AG04450 (cell line): ENCODE measurements at regions of chr12 and their contacts with region 1.

Region 1: DNA sequence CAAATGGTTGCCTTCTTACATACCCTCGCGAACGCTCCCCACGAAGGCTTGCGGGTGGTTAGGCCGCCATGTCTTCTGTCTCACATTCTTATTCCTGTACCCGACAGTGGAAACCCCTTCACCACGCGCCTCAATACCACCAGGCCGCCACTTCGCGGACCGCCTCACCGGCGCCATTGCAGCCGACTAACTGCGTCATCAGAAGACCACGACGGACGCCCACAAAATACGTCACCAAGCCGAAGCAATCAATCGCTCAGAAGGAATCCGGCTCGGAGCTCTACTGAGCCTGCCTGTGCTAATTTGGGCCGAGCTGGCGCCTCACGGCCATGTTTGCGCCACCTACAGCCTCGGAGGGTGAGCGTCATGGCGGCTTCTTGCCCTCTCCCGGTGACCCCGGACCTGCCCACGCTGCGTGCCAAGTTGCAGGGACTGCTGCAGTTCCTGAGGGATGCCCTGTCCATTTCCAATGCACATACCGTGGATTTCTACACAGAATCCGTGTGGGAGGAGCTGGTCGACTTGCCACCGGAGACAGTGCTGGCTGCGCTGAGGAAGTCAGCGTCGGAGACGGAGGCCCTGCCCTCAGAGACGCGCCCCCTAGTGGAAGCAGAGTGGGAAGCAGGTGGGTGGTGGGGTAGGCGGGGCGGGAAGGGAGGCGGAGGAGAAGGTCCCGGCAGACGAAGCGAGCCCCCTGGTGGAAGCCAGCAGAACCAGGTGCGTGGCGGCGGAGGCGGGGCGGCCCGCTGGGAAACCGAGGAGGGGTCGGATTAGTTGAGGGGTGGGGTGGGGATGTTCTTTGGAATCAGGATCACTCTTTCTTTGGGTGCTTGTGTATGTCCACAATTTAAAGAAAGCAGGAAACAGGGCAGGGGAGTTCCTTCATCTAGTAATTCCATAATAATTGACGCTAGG is at the starts of genes CCDC59 and METTL25:
- DNase-seq: peak; percentile 96
- H3K4me3 ChIP-seq: peak within 1 kb of the TSS; percentile 89
- H3K27ac ChIP-seq: peak within 1 kb of the TSS; percentile 96
- H3K27me3 ChIP-seq: no peaks in the 10 kb centered on the region
- CTCF ChIP-seq: peak; percentile 83
- polyA plus RNA-seq, gene CCDC59: 16.3 and 27.3 TPM in 2 replicates
- polyA plus RNA-seq, gene METTL25: 4.3 and 7.9 TPM in 2 replicates

Region 2: GRCh38 chr12:82279539-82280058 is 78.9 kb before region 1 on chr12:
- CTCF ChIA-PET with region 1: no interaction called
- POLR2A ChIA-PET with region 1: no interaction called
- DNase-seq: no peak
- H3K4me3 ChIP-seq: no peak overlapping the region
- H3K27ac ChIP-seq: no peak overlapping the region
- H3K27me3 ChIP-seq: no peaks in the 10 kb centered on the region
- CTCF ChIP-seq: no peak

Region 3: GRCh38 chr12:82326905-82327503 is 31.5 kb before region 1 on chr12:
- CTCF ChIA-PET with region 1: interaction called, 11 read pairs
- POLR2A ChIA-PET with region 1: no interaction called
- DNase-seq: no peak
- H3K4me3 ChIP-seq: no peak overlapping the region
- H3K27ac ChIP-seq: no peak overlapping the region
- H3K27me3 ChIP-seq: no peaks in the 10 kb centered on the region
- CTCF ChIP-seq: peak; percentile 57

Region 4: DNA sequence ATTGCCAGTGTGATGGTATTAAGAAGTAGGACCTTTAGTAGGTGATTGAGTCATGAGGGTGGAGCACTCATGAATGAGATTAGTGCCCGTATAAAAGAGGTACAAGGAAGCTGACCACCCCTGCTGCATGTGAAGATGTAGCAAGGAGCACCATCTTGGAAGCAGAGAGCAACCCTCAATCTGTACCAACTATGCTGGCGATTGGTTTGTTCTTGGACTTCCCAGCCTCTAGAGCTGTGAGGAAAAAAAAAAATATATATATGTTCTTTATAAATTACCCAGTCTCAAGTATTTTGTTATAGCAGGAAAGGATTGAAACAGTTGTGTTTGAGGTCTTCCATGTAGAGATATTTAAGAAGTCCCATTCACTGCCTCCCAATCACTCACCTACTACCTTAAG is 16.7 kb after region 1 on chr12:
- CTCF ChIA-PET with region 1: interaction called, 55 read pairs
- POLR2A ChIA-PET with region 1: interaction called, 6 read pairs
- DNase-seq: no peak
- H3K4me3 ChIP-seq: no peak overlapping the region
- H3K27ac ChIP-seq: no peak overlapping the region
- H3K27me3 ChIP-seq: no peaks in the 10 kb centered on the region
- CTCF ChIP-seq: no peak

Region 5: GRCh38 chr12:82383930-82384552 is 25.6 kb after region 1 on chr12:
- CTCF ChIA-PET with region 1: interaction called, 17 read pairs
- POLR2A ChIA-PET with region 1: no interaction called
- DNase-seq: no peak
- H3K4me3 ChIP-seq: no peak overlapping the region
- H3K27ac ChIP-seq: no peak overlapping the region
- H3K27me3 ChIP-seq: no peaks in the 10 kb centered on the region
- CTCF ChIP-seq: peak; percentile 68

Region 6: GRCh38 chr12:82398883-82399282 is 40.4 kb after region 1 on chr12:
- CTCF ChIA-PET with region 1: interaction called, 16 read pairs
- POLR2A ChIA-PET with region 1: no interaction called
- DNase-seq: no peak
- H3K4me3 ChIP-seq: no peak overlapping the region
- H3K27ac ChIP-seq: no peak overlapping the region
- H3K27me3 ChIP-seq: no peaks in the 10 kb centered on the region
- CTCF ChIP-seq: no peak

Region 7: DNA sequence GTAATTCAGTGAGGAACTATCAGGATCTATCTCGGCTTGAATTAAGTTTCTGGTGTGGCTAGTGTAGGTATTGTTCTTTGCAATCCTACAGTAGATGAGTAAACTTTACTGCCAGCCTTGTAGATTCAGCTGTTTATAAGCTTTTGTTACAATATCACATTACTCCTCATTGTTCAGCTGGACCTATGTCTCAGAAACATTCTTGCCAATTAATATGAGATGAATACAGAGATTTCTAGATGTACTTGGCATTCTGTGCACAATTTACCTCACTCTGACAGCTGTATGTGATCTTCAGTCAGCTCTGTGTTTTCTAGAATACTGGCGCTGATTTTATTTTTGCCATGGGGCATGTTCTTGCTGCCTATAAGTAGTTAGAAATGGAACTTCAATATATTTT is 55.6 kb after region 1 on chr12:
- CTCF ChIA-PET with region 1: interaction called, 10 read pairs
- POLR2A ChIA-PET with region 1: no interaction called
- DNase-seq: no peak
- H3K4me3 ChIP-seq: no peak overlapping the region
- H3K27ac ChIP-seq: no peak overlapping the region
- H3K27me3 ChIP-seq: no peaks in the 10 kb centered on the region
- CTCF ChIP-seq: no peak

Region 8: GRCh38 chr12:82425241-82425640 is 66.8 kb after region 1 on chr12:
- CTCF ChIA-PET with region 1: no interaction called
- POLR2A ChIA-PET with region 1: no interaction called
- DNase-seq: no peak
- H3K4me3 ChIP-seq: no peak overlapping the region
- H3K27ac ChIP-seq: no peak overlapping the region
- H3K27me3 ChIP-seq: no peaks in the 10 kb centered on the region
- CTCF ChIP-seq: no peak

Region 9: DNA sequence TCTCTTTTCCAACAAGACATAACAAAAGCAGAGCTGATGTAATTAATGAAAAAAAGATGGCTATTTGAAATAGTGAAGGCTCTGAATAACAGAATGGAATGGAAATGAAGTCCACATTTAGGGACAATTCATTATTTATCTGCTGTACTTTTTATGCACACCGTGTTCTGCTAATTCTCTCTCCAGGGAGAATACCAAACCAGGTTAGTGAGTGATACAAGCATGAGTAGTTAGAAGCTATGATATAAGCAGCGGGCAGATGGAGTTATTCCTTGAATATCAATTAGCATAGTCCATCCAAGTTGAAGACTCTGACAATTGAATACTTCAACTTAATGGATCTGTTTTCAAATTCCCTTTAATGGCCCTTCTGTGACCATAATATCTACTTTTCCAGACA is 166.2 kb after region 1 on chr12:
- CTCF ChIA-PET with region 1: interaction called, 14 read pairs
- POLR2A ChIA-PET with region 1: no interaction called
- DNase-seq: no peak
- H3K4me3 ChIP-seq: no peak overlapping the region
- H3K27ac ChIP-seq: no peak overlapping the region
- H3K27me3 ChIP-seq: no peaks in the 10 kb centered on the region
- CTCF ChIP-seq: no peak